ENCODE measurements at regions of chr1 and their contacts with region 1.

Region 1: GRCh38 chr1:89198491-89199072 is at the start of gene GBP4:
- DNase-seq: peak; percentile 65
- H3K4me3 Mint-ChIP-seq: peak within 1 kb of the TSS; percentile 92
- H3K27ac Mint-ChIP-seq: peak within 1 kb of the TSS; percentile 98
- H3K4me1 Mint-ChIP-seq: peaks cover 84% of the 10 kb centered on the region
- H3K27me3 Mint-ChIP-seq: no peaks in the 10 kb centered on the region
- total RNA-seq, gene GBP4: 22.9 to 23.2 TPM

Region 2: GRCh38 chr1:88891318-88891950 is 307.1 kb before region 1 on chr1 and contains the start of gene GTF2B:
- CTCF ChIA-PET with region 1: no interaction called
- intact Hi-C with region 1: loop called (anchors 2 kb)
- DNase-seq: peak; percentile 97
- H3K4me3 Mint-ChIP-seq: peak within 1 kb of the TSS; percentile 82
- H3K27ac Mint-ChIP-seq: peak within 1 kb of the TSS; percentile 96
- H3K4me1 Mint-ChIP-seq: peaks cover 36% of the 10 kb centered on the region
- H3K27me3 Mint-ChIP-seq: no peaks in the 10 kb centered on the region
- total RNA-seq, gene GTF2B: 35.2 to 36.1 TPM

Region 3: GRCh38 chr1:88910401-88910800 is 288.2 kb before region 1 on chr1:
- CTCF ChIA-PET with region 1: no interaction called
- intact Hi-C with region 1: no loop called
- DNase-seq: no peak
- H3K4me3 Mint-ChIP-seq: no peak overlapping the region
- H3K27ac Mint-ChIP-seq: no peak overlapping the region
- H3K4me1 Mint-ChIP-seq: peaks cover 2% of the 10 kb centered on the region
- H3K27me3 Mint-ChIP-seq: no peaks in the 10 kb centered on the region

Region 4: DNA sequence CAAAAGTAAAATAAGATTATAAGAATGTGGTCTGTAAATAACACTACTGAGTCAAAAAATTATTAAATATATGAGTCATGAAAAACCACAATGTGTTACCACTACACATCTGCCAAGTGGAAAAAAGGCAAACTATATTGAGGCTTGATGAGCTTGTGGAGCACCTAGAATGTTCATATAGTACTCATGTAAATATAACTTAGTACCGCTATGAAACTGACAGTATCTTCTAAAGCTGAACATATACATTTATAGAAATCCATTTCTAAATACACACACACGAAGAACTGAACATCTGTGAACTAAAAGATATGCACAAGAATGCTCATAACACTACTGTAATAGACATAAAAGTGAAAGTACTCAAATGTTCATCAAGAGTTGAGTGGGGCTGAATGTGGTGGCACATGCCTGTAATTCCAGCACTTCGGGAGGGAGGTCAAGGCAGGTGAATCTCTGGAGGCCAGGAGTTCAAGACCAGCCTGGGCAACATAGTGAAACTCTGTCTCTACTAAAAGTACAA is 157.4 kb before region 1 on chr1:
- CTCF ChIA-PET with region 1: interaction called, 4 read pairs
- intact Hi-C with region 1: loop called (anchors 1 kb)
- DNase-seq: peak; percentile 63
- H3K4me3 Mint-ChIP-seq: peak overlapping the region; percentile 25
- H3K27ac Mint-ChIP-seq: peak overlapping the region; percentile 72
- H3K4me1 Mint-ChIP-seq: peaks cover 33% of the 10 kb centered on the region
- H3K27me3 Mint-ChIP-seq: peaks cover 11% of the 10 kb centered on the region

Region 5: DNA sequence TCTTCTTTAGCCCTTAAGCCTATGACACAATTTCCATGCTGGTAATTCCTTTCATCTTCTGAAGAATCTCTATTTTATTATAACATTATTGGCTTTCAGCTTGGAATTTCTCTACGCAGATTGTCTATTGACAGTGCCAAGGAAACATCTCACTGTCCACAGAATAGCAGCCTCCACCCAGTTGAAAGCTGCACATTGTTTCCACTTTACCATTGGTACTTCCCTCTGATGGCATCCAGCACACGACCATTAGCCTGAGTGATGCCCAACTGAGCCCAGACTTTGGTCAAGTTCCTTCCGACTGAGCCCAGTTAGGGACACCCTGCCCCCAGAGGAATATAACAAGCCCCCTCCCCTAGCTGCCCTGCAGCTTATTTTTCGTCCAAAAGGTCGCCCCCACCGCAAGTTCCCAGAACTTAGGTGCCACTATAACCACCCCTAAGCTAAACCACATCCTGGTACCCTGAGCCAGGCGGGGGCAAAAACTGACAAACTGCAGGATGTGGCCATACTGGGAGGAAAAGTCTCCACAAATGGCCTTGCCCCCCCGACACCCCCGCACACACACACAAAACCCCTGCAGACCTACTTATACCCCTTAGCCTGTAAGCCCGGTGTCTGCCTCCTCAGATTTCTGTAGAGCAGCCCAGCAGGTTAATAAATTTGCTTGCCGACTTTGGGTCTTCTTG is 60.8 kb after region 1 on chr1:
- CTCF ChIA-PET with region 1: no interaction called
- intact Hi-C with region 1: loop called (anchors 2 kb)
- DNase-seq: peak; percentile 75
- H3K4me3 Mint-ChIP-seq: peak overlapping the region; percentile 15
- H3K27ac Mint-ChIP-seq: peak overlapping the region; percentile 86
- H3K4me1 Mint-ChIP-seq: peaks cover 68% of the 10 kb centered on the region
- H3K27me3 Mint-ChIP-seq: no peaks in the 10 kb centered on the region

Region 6: GRCh38 chr1:89310505-89310904 is 111.9 kb after region 1 on chr1:
- CTCF ChIA-PET with region 1: interaction called, 4 read pairs
- intact Hi-C with region 1: loop called (anchors 1 kb)
- DNase-seq: no peak
- H3K4me3 Mint-ChIP-seq: no peak overlapping the region
- H3K27ac Mint-ChIP-seq: peak overlapping the region; percentile 86
- H3K4me1 Mint-ChIP-seq: peaks cover 49% of the 10 kb centered on the region
- H3K27me3 Mint-ChIP-seq: no peaks in the 10 kb centered on the region

Region 7: DNA sequence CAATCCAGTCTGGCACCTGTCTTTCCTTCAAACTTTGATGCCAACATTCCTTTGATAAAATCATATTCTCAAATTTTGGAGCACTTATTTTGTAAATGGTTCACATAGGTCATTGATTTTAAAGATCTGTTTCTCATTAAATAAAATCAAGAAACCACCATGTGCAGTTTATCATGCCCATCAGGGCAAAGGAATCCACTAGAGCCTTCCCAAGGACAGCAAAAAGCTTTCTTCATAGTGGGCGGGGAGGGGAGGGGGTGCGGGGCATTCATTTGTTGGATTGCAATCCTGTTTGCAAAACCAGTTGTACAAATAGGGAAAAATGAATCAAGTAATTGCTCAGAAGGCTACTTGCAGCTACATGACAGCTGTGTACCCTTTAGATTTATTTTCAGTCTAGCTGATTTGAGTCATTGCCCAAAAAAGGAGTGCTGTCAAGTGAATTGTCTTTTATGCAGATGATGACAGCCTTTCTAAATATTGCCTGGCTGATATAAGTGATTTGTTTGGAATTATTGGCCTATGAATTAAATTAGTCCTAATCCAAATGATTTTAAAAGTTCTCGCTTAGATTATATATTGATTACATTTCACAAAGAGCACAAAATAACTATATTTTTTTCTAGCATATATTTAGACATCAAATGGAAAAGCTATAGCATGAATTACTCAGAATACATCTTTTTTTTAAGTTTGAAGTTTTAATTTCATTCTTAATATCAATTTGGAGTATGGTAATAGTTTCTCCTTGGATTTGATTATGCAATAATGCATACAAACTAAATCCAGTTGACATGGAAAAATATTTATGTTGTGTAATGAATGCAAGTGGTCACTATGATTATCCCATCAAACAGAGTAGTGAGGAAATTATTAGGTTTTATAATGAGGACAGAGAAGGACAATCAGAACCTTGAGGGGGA is 349.2 kb after region 1 on chr1:
- CTCF ChIA-PET with region 1: no interaction called
- intact Hi-C with region 1: loop called (anchors 2 kb)
- DNase-seq: peak; percentile 56
- H3K4me3 Mint-ChIP-seq: no peak overlapping the region
- H3K27ac Mint-ChIP-seq: peak overlapping the region; percentile 95
- H3K4me1 Mint-ChIP-seq: peaks cover 84% of the 10 kb centered on the region
- H3K27me3 Mint-ChIP-seq: no peaks in the 10 kb centered on the region

Measured in activated naive CD4-positive, alpha-beta T cell treated with anti-CD3 and anti-CD28 coated beads for 36 hours (primary cell).